BJ (cell line): ENCODE measurements at regions of chr2 and their contacts with region 1.

Region 1: DNA sequence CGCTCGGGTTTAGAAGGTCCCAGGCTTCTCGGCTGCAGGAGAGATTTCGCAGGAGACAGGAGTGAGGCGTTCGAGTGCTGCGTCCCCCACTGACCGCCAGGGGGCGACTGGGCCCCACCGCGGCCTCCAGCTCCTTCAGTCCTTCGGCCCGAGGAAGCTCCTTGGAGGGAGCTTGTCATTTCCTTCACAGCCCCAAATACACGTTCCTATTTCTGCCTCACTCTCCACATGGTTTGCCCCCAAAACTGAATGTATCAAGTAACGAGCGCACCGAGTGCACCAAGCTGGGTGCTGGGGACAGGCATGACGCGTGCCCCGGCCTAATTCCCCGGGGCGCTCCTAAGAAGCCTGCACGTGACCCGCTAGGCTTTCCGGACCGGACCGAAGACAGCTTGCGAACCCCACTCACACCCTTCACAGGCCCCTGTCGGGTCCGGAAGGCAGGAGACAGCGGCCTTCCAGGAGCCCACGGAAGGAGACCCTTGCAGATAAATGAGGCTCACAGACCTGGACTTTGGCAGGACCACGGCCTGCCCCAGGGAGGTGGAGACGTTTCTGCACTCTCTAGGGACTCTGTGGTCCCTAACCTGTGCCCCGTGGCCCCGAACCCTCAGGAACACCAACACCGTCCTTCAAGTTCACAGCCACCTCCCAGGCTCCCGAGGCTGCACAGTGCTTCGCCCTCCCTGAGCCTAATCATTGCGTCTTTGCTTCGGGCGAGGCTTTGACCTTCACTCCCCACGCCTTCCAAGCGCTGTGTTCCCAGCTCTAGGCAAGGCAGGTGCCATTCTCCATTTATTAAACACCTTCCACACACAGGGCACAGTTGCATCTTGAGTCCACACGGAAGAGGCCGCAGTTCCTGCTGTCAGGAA is 13.0 kb upstream of the FAHD2A start:
- DNase-seq: no peak
- H3K4me3 ChIP-seq: no peak overlapping the region
- H3K27me3 ChIP-seq: no peaks in the 10 kb centered on the region; the same call in 1 of the 2 replicates
- CTCF ChIP-seq: peak; percentile 99

Region 2: GRCh38 chr2:95345566-95346230 is 43.8 kb before region 1 on chr2:
- CTCF ChIA-PET with region 1: interaction called, 16 read pairs
- POLR2A ChIA-PET with region 1: no interaction called
- DNase-seq: peak; percentile 29
- H3K4me3 ChIP-seq: peak overlapping the region; percentile 65
- H3K27me3 ChIP-seq: peaks cover 1% of the 10 kb centered on the region
- CTCF ChIP-seq: peak; percentile 79

Region 3: GRCh38 chr2:95372216-95372829 is 17.2 kb before region 1 on chr2:
- CTCF ChIA-PET with region 1: interaction called, 11 read pairs
- POLR2A ChIA-PET with region 1: no interaction called
- DNase-seq: no peak
- H3K4me3 ChIP-seq: no peak overlapping the region
- H3K27me3 ChIP-seq: no peaks in the 10 kb centered on the region
- CTCF ChIP-seq: no peak

Region 4: DNA sequence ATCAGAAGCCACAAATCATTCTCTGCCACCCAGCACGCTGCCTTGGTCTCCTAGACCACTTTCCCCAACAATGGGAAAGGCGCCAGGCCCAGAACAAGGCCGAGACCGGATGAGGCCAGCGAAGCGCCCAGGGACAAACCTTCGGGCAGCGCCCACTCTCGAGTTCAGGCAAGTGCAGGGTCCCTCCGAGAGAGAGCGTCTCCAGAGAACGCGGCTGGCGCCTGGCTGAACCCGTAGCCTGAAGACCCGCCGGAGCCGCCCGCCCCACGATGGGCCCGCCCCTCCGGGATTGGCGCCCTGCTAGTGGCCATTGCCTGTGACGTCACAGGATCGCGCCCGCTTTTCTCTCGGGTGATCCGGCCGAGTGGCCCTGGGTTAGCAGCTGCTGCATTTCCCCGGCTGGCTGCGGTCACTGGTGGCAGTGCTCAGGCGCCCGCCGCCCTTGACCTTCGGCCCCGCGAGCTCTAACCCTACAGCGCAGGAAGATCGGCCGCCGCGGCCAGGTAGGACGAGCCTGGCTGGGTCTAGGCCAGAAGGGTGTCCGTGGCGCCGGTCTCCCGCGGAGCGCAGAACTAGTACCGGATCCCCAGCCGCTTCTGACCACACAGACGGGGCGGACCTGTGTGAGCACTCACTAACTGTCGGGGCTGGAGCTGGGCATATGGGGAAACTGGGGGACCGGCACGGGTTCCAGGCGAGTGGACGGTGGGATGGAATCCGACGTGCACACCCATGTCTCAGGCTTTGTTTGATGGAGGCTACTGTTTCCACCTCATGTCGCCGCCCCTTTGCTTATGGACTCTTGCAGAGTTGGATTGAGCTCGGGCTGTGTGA is 13.1 kb after region 1 on chr2 and contains the start of gene FAHD2A:
- CTCF ChIA-PET with region 1: interaction called, 59 read pairs
- POLR2A ChIA-PET with region 1: no interaction called
- DNase-seq: peak; percentile 18
- H3K4me3 ChIP-seq: peak within 1 kb of the TSS; percentile 85
- H3K27me3 ChIP-seq: no peaks in the 10 kb centered on the region
- CTCF ChIP-seq: no peak
- polyA plus RNA-seq, gene FAHD2A: 31.2 and 44.1 TPM in 2 replicates

Region 5: GRCh38 chr2:96359310-96359709 is 969.8 kb after region 1 on chr2:
- CTCF ChIA-PET with region 1: no interaction called
- POLR2A ChIA-PET with region 1: no interaction called
- DNase-seq: no peak
- H3K4me3 ChIP-seq: no peak overlapping the region
- H3K27me3 ChIP-seq: no peaks in the 10 kb centered on the region
- CTCF ChIP-seq: no peak